ENCODE measurements at regions of chr21 and their contacts with region 1.

Region 1: DNA sequence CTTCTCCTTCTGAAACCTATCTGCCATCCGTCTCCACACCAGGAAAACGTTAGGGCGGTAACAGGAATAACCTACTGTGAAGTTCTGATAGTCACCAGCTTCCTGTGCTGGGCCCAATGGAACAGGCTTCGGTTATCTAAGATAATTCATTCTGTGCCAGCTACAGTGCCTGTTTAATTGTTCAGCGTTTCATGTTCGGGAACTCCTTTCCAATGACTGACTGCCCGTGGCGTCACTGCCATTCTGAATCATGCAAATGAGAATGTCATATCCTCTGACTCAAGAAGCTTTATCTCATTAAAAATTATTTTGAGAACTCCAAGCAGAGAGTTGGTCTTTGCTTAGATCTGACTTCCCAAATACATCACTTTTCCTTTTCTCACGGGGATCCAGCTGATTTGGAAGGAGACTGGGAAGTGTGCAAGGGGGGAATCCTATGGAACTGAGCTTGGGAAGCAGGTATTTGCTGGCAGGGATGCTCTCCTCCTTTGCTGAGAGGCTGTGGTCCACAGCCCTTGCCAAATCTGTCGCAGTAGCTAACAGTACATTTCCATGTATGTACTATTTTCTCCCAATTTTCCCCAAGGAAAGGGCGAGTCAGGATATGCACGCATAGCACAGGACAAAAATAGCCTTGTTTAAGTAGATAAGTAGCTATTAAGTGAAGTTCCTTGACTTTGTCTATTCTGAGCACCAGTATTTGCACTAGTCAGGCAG is 358.7 kb downstream of the LTN1 start:
- DNase-seq: peak; percentile 89
- H3K4me3 ChIP-seq: no peak overlapping the region
- H3K27ac ChIP-seq: peak overlapping the region; percentile 98
- H3K4me1 ChIP-seq: peaks cover 66% of the 10 kb centered on the region
- H3K27me3 ChIP-seq: no peaks in the 10 kb centered on the region
- CTCF ChIP-seq: no peak

Region 2: DNA sequence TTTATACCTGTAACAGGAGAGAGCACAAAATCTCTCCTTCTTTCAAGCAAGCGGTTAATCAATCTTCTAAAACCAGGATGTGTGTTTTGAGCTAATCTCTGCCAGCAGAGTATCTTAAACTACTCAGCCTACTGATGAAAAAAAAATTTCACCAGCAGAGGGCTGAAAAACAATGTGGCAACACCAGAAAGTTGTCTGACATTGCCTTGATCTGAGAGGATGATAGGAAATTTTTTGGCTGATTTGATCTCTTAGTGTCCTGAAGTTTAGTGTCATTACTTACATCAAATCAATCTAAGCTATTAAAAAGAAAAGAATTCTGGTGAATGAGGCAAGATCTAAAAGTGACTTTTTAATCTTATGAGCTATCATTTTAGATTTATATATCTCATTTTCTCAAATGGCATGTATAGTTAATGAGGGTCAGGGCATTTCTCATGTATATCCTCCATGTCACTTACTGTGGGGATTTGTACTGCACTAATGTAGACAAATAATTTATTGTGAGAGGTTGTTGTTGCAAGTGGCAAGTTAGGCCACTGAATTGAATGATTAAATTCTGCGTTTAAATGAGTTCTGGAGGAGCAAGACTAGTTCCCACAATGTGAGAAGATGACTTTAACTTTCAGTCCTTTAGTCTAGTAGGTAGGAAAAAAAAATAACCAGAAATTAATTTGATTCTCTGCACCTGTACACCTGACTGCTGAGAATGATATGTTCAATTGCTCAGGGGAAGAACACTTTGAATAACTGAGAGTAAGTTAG is 1799.6 kb before region 1 on chr21:
- CTCF ChIA-PET with region 1: no interaction called
- dilution Hi-C with region 1: no loop called
- in situ Hi-C with region 1: loop called (anchors 10 to 25 kb)
- intact Hi-C with region 1: no loop called
- DNase-seq: no peak
- H3K4me3 ChIP-seq: no peak overlapping the region
- H3K27ac ChIP-seq: peak overlapping the region; percentile 46
- H3K4me1 ChIP-seq: peaks cover 20% of the 10 kb centered on the region
- H3K27me3 ChIP-seq: no peaks in the 10 kb centered on the region
- CTCF ChIP-seq: peak; percentile 16 to 37

Region 3: GRCh38 chr21:26842976-26843932 is 1790.7 kb before region 1 on chr21:
- CTCF ChIA-PET with region 1: no interaction called
- dilution Hi-C with region 1: no loop called
- in situ Hi-C with region 1: loop called (anchors 10 to 25 kb)
- intact Hi-C with region 1: loop called (anchors 5 kb)
- DNase-seq: peak; percentile 91
- H3K4me3 ChIP-seq: peak overlapping the region; percentile 70 to 85 (median 74)
- H3K27ac ChIP-seq: peak overlapping the region; percentile 80
- H3K4me1 ChIP-seq: peaks cover 27% of the 10 kb centered on the region
- H3K27me3 ChIP-seq: no peaks in the 10 kb centered on the region
- CTCF ChIP-seq: peak in 1 of 2 donors; percentile 29

Region 4: DNA sequence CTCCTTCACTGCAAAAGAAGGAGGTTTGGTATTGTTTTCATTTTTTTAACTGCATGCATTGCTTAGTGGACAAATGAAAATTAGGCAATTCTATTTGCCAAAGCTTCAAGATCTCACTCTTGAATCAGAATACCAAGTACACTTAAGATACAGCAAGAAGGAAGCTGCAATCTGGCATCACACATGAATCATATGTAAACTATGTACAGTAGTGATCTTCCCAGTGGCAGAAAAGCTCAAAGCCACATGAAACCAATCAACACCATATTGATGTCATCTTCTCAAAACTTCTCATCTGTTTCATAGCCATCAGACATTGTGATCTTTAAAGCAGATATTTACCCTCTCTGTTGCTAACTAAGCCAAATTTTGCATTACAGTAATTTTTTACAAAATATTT is 191.4 kb before region 1 on chr21:
- CTCF ChIA-PET with region 1: no interaction called
- dilution Hi-C with region 1: no loop called
- in situ Hi-C with region 1: no loop called
- intact Hi-C with region 1: loop called (anchors 5 kb)
- DNase-seq: peak; percentile 14
- H3K4me3 ChIP-seq: no peak overlapping the region
- H3K27ac ChIP-seq: no peak overlapping the region
- H3K4me1 ChIP-seq: no peaks in the 10 kb centered on the region
- H3K27me3 ChIP-seq: no peaks in the 10 kb centered on the region
- CTCF ChIP-seq: no peak

Region 5: DNA sequence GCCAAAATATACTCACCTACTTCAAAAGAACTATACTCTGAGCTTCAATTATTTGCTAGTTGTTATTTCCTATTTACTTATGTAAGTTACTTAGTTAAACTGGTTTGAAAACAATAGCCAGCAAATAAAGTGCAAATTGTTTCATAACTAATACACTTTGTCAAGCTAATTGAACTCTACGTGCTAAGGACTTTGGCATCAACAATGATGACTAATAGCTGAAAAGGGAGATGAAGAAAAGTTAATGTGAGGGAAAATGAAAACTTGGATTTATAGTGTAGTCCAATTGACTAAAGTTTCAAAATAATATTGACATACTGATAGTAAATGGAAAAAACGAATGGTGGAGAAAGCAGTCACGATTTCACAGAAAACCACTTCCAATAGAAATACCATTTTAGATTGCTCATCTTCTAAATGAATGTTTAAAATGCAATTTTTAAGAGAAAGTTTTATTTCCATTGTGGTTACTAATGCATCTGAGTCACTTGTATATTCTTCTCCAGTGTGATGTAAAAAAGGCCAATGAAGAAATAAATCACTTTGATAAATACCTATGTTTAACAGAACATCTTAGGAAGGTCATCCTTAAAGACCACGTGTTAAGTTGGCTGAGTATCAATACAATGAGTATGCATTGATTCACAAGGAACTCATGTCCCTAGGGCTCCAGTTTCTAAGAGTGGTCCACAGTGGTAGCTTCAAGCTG is 96.5 kb before region 1 on chr21:
- CTCF ChIA-PET with region 1: no interaction called
- dilution Hi-C with region 1: no loop called
- in situ Hi-C with region 1: no loop called
- intact Hi-C with region 1: loop called (anchors 2 kb)
- DNase-seq: peak; percentile 60
- H3K4me3 ChIP-seq: no peak overlapping the region
- H3K27ac ChIP-seq: peak overlapping the region; percentile 16
- H3K4me1 ChIP-seq: peaks cover 16% of the 10 kb centered on the region
- H3K27me3 ChIP-seq: no peaks in the 10 kb centered on the region
- CTCF ChIP-seq: no peak

Region 6: DNA sequence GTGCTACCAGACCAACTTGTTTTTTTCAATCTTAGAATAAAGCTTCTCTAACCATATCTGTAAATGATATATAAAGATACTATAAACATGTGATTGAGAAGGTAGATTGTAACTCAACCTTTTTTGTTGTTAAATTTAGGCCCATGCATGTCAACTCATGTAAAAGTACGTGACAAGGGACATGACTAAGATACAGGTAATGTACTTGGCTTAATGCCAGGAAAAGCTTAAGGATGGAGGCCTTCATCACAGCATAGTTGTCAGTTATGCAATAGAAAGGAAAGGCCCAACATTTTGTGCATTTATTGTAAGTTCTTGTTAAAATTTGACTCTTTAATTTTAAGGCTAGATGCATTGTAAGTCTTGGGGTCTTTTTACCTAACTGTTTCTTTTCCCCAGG is 53.6 kb after region 1 on chr21:
- CTCF ChIA-PET with region 1: no interaction called
- dilution Hi-C with region 1: no loop called
- in situ Hi-C with region 1: no loop called
- intact Hi-C with region 1: loop called (anchors 2 kb)
- DNase-seq: peak; percentile 85
- H3K4me3 ChIP-seq: no peak overlapping the region
- H3K27ac ChIP-seq: peak overlapping the region; percentile 46
- H3K4me1 ChIP-seq: peaks cover 22% of the 10 kb centered on the region
- H3K27me3 ChIP-seq: no peaks in the 10 kb centered on the region
- CTCF ChIP-seq: no peak

Region 7: GRCh38 chr21:28704746-28705145 is 70.7 kb after region 1 on chr21:
- CTCF ChIA-PET with region 1: no interaction called
- dilution Hi-C with region 1: loop called (anchors 5 kb)
- in situ Hi-C with region 1: no loop called
- intact Hi-C with region 1: no loop called
- DNase-seq: no peak
- H3K4me3 ChIP-seq: no peak overlapping the region
- H3K27ac ChIP-seq: no peak overlapping the region
- H3K4me1 ChIP-seq: no peaks in the 10 kb centered on the region
- H3K27me3 ChIP-seq: no peaks in the 10 kb centered on the region
- CTCF ChIP-seq: no peak

Region 8: DNA sequence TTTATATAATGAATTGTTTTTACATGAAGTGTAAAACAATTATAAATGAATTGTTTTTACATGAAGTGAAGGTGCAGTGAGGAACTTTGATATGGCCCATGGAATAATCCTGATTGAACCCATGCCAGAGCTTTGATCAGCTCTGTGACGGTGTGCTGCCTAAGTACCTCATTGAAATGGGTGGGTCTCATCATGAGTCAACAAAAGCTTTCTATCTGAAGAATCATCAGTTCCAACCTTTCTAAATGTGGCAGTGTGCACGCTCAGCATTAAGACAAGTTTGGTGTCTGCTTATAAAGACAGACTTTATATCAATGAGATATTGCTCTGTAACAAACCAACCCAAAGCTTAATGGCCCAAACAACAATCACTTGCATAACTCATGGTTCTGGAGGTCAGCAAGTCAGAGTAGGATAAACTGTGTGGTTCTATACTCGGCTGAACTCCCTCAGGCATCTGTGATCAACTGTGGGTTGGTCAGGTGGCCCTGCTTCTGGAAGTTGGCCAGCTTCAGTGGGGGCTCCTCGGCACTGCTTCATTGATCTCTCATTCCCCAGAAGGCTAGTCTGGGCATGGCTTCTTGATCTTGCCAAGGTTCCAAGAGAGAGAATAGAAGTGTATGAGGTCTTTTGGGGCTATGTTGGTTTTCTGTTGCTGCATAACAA is 100.6 kb after region 1 on chr21:
- CTCF ChIA-PET with region 1: no interaction called
- dilution Hi-C with region 1: no loop called
- in situ Hi-C with region 1: no loop called
- intact Hi-C with region 1: no loop called
- DNase-seq: peak; percentile 54
- H3K4me3 ChIP-seq: no peak overlapping the region
- H3K27ac ChIP-seq: peak overlapping the region; percentile 20
- H3K4me1 ChIP-seq: peaks cover 18% of the 10 kb centered on the region
- H3K27me3 ChIP-seq: no peaks in the 10 kb centered on the region
- CTCF ChIP-seq: no peak

Measured in mammary epithelial cell (primary cell).